ENCODE measurements at regions of chr3 and their contacts with region 1.

Region 1: DNA sequence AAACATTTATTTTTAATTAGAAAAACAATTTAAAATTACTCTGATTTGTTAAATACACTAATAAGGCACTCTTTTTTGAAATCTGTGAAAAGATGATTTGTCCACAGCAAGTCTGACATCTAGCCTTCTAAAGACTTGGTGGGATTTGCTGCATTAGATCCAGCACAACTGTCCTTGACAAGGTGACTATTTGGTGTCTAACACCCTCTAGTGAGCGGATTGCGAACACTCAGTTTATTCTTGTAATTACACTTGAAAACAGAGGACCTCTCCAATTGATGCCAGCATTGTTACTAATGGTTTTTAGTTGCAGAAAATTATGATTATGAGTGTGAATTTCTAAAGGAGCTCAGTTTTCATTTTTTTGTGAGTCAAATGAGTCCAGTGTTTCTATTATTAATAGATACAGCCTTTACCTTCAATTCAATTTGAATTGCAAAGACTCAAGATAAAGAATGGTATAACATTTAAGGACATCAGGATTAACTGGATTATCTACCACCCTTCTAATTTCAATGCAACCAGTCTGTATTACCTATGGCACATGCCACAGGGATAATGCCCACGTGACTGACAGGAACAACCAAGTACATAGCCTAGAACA is 29.7 kb upstream of the STRIT1 start:
- DNase-seq: peak; percentile 83
- H3K4me3 ChIP-seq: no peak overlapping the region
- H3K27ac ChIP-seq: no peak overlapping the region
- H3K4me1 ChIP-seq: peaks cover 5% of the 10 kb centered on the region
- H3K27me3 ChIP-seq: no peaks in the 10 kb centered on the region
- CTCF ChIP-seq: peak; percentile 77

Region 2: GRCh38 chr3:154105218-154105975 is 1217.8 kb before region 1 on chr3:
- CTCF ChIA-PET with region 1: no interaction called
- POLR2A ChIA-PET with region 1: no interaction called
- intact Hi-C with region 1: loop called (anchors 10 kb)
- DNase-seq: no peak
- H3K4me3 ChIP-seq: no peak overlapping the region
- H3K27ac ChIP-seq: no peak overlapping the region
- H3K4me1 ChIP-seq: no peaks in the 10 kb centered on the region
- H3K27me3 ChIP-seq: no peaks in the 10 kb centered on the region
- CTCF ChIP-seq: no peak

Region 3: DNA sequence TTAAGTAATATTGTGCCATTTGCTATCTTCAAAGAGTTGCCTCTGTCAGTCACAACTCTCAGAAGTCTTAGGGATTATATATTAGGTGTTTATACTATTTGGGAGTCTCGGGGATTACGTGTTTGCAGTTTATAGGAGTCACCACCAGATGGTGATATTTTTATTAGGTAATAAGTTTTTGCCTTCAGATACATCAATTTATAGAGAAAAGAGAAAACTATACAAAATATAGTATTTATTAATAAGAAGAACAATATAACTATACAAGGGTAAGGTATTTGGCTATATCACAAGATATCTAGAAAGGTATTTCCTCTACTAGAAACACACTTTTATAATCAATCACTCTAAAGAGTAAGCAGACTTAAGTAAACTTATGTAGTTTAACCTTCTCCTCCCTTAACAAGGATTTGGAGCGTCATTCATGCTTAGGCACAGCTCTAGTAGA is 988.2 kb before region 1 on chr3:
- CTCF ChIA-PET with region 1: no interaction called
- POLR2A ChIA-PET with region 1: no interaction called
- intact Hi-C with region 1: loop called (anchors 5 kb)
- DNase-seq: peak; percentile 60
- H3K4me3 ChIP-seq: no peak overlapping the region
- H3K27ac ChIP-seq: no peak overlapping the region
- H3K4me1 ChIP-seq: no peaks in the 10 kb centered on the region
- H3K27me3 ChIP-seq: peaks cover 8% of the 10 kb centered on the region
- CTCF ChIP-seq: peak; percentile 72

Region 4: DNA sequence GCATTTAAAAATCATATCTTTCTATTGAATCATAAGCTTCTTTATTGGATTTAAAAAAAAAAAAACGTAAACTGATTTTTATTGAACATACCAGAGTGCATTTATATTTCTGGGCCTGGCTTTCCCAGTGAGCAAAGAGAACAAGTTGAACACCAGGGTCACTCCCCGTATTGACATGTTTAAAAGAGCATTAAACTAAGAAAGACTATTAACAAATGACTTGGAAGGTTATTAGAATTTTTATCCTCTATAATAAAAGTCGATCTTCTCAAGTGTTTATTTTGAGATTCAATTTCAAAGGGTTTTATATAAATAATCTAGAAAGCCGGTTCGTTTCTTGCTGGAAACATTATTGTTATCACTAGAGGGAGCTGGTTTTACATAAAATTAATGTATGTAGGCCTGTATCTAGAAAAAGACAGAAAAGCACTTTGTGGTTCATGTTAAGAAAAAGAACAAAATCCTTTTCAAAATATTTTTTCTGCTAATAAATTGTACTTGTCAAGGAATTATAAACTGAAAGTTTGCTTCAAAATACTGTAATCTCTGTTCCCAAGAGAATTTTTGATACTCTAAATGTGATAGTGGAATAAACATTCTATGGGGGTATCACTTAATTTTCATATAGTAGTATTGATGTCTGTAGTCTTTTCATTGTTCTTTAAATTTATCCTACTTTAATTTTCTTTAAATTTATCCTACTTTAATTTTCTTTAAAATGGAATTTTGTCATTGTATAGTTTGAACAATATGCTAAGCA is 564.9 kb before region 1 on chr3:
- CTCF ChIA-PET with region 1: no interaction called
- POLR2A ChIA-PET with region 1: no interaction called
- intact Hi-C with region 1: loop called (anchors 2 kb)
- DNase-seq: peak; percentile 31
- H3K4me3 ChIP-seq: no peak overlapping the region
- H3K27ac ChIP-seq: no peak overlapping the region
- H3K4me1 ChIP-seq: no peaks in the 10 kb centered on the region
- H3K27me3 ChIP-seq: no peaks in the 10 kb centered on the region
- CTCF ChIP-seq: peak; percentile 59

Region 5: GRCh38 chr3:154904328-154904727 is 418.8 kb before region 1 on chr3:
- CTCF ChIA-PET with region 1: interaction called, 3 read pairs
- POLR2A ChIA-PET with region 1: no interaction called
- intact Hi-C with region 1: loop called (anchors 1 kb)
- DNase-seq: peak; percentile 35
- H3K4me3 ChIP-seq: no peak overlapping the region
- H3K27ac ChIP-seq: no peak overlapping the region
- H3K4me1 ChIP-seq: no peaks in the 10 kb centered on the region
- H3K27me3 ChIP-seq: no peaks in the 10 kb centered on the region
- CTCF ChIP-seq: peak; percentile 49

Region 6: DNA sequence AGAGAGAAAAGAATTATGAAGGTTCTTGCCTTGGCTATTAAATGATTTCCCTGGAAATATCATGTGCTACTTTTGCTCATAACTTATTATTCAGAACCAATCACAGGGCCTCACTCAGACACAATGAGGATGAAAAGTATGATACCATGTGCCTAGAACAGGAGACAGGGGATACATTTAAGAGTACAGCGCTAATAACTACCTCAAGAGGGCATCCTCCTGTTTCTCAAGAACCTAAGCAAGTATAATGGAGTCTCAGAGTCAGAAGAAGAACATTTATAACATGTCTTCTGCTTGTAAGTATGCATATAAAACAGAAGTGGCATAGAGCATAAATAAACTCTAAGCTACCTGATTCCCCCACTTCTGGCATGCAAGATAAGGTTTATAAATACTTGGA is 368.4 kb before region 1 on chr3:
- CTCF ChIA-PET with region 1: no interaction called
- POLR2A ChIA-PET with region 1: no interaction called
- intact Hi-C with region 1: loop called (anchors 2 kb)
- DNase-seq: peak; percentile 18
- H3K4me3 ChIP-seq: no peak overlapping the region
- H3K27ac ChIP-seq: no peak overlapping the region
- H3K4me1 ChIP-seq: no peaks in the 10 kb centered on the region
- H3K27me3 ChIP-seq: no peaks in the 10 kb centered on the region
- CTCF ChIP-seq: peak; percentile 37; the same call in 1 of the 2 replicates

Measured in A673 (cell line).